Vagina (tissue), 2 donors: ENCODE measurements at regions of chr16 and their contacts with region 1.

Region 1: GRCh38 chr16:75238132-75238852 is 13.1 kb downstream of the BCAR1 start:
- DNase-seq: no peak
- H3K4me3 ChIP-seq: peak overlapping the region in 1 of 2 donors; percentile 40
- H3K27ac ChIP-seq: peak overlapping the region; percentile 85
- H3K4me1 ChIP-seq: peaks cover 58% of the 10 kb centered on the region
- H3K27me3 ChIP-seq: no peaks in the 10 kb centered on the region
- CTCF ChIP-seq: no peak
- POLR2A ChIP-seq: no peak

Region 2: DNA sequence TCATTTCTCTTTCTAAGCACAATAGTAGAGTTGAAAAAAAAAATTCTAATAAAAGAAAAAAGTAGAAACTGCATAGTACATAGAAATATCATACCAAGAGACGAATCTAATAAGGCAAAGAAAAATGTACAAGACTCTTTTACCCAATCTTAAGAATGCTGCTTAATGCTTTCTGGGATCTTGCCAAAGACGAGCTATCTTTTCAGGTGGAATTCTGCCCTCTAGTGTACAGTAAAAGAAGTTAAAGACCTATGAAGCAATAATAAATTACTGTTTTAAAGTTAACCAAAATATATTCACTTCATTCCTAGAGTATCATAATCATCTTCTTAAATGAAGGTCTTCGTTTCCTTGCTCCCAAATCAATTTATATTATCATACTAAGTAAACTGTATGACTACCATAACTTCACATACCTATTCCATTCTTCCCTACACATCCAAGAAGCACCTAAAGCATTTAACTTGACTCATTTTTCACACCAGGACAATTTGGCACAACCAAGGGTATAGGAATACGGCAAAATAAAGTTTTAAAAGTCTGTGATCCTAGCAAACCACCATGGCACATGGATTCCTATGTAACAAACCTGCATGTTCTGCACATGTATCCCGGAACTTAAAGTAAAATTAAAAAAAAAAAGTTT is 147.3 kb after region 1 on chr16:
- intact Hi-C with region 1: loop called (anchors 5 kb)
- DNase-seq: no peak
- H3K4me3 ChIP-seq: no peak overlapping the region
- H3K27ac ChIP-seq: no peak overlapping the region
- H3K4me1 ChIP-seq: peaks cover 39% of the 10 kb centered on the region
- H3K27me3 ChIP-seq: no peaks in the 10 kb centered on the region
- CTCF ChIP-seq: peak; percentile 70 to 85 (median 83)
- POLR2A ChIP-seq: no peak

Region 3: GRCh38 chr16:75810342-75810741 is 572.0 kb after region 1 on chr16:
- intact Hi-C with region 1: no loop called
- DNase-seq: no peak
- H3K4me3 ChIP-seq: no peak overlapping the region
- H3K27ac ChIP-seq: no peak overlapping the region
- H3K4me1 ChIP-seq: no peaks in the 10 kb centered on the region
- H3K27me3 ChIP-seq: no peaks in the 10 kb centered on the region
- CTCF ChIP-seq: no peak
- POLR2A ChIP-seq: no peak